ENCODE measurements at regions of chr1 and their contacts with region 1.

Region 1: DNA sequence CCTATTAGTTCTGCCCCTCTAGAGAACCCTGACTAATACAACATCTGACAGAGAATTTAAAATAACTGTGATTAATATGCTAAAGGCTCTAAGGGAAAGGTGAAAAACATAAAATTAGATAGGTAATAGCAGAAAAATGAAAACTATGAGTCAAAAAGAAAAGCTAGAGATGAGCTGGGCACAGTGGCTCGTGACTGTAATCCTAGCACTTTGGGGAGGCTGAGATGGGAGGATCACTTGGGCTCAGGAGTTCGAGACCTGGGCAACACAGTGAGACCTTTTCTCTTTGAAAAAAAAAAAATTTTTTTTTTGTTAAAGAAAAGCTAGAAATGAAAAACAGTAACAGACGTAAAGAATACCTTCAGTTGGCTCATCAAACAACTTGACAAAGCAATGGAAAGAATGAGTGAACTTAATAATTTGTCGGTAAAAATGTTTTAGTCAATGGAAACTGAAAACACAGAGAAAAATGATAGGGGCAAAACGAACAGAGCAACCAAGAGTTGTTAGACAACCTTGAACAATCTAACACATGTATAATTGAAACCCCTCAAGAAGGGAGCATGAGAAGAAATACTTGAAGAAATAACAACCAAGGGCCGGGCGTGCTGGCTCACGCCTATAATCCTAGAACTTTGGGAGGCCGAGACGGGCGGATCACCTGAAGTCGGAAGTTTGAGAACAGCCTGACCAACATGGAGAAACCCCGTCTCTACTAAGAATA is 132.9 kb upstream of the GFI1 start:
- DNase-seq: no peak
- ATAC-seq: no peak
- H3K4me3 ChIP-seq: no peak overlapping the region
- H3K27ac ChIP-seq: no peak overlapping the region
- H3K4me1 ChIP-seq: no peaks in the 10 kb centered on the region
- H3K27me3 ChIP-seq: no peaks in the 10 kb centered on the region

Region 2: GRCh38 chr1:91981996-91982609 is 637.5 kb before region 1 on chr1:
- intact Hi-C with region 1: no loop called
- DNase-seq: no peak
- ATAC-seq: no peak
- H3K4me3 ChIP-seq: no peak overlapping the region
- H3K27ac ChIP-seq: no peak overlapping the region
- H3K4me1 ChIP-seq: no peaks in the 10 kb centered on the region
- H3K27me3 ChIP-seq: no peaks in the 10 kb centered on the region

Region 3: GRCh38 chr1:92310185-92310597 is 309.4 kb before region 1 on chr1:
- intact Hi-C with region 1: loop called in 1 of 4 experiments (anchors 10 kb)
- DNase-seq: no peak
- ATAC-seq: no peak
- H3K4me3 ChIP-seq: no peak overlapping the region
- H3K27ac ChIP-seq: no peak overlapping the region
- H3K4me1 ChIP-seq: no peaks in the 10 kb centered on the region
- H3K27me3 ChIP-seq: no peaks in the 10 kb centered on the region

Region 4: GRCh38 chr1:93502561-93502960 is 882.9 kb after region 1 on chr1:
- intact Hi-C with region 1: no loop called
- DNase-seq: no peak
- ATAC-seq: no peak
- H3K4me3 ChIP-seq: no peak overlapping the region
- H3K27ac ChIP-seq: no peak overlapping the region
- H3K4me1 ChIP-seq: peaks cover 2% of the 10 kb centered on the region
- H3K27me3 ChIP-seq: no peaks in the 10 kb centered on the region

Measured in right cardiac atrium (tissue), 5 donors.